Activated CD4-positive, alpha-beta T cell treated with anti-CD3 and anti-CD28 coated beads, Interleukin-2, amount 10 ng/mL, durations not matched to agents 7 days and 5 days (primary cell): ENCODE measurements at regions of chr6 and their contacts with region 1.

Region 1: DNA sequence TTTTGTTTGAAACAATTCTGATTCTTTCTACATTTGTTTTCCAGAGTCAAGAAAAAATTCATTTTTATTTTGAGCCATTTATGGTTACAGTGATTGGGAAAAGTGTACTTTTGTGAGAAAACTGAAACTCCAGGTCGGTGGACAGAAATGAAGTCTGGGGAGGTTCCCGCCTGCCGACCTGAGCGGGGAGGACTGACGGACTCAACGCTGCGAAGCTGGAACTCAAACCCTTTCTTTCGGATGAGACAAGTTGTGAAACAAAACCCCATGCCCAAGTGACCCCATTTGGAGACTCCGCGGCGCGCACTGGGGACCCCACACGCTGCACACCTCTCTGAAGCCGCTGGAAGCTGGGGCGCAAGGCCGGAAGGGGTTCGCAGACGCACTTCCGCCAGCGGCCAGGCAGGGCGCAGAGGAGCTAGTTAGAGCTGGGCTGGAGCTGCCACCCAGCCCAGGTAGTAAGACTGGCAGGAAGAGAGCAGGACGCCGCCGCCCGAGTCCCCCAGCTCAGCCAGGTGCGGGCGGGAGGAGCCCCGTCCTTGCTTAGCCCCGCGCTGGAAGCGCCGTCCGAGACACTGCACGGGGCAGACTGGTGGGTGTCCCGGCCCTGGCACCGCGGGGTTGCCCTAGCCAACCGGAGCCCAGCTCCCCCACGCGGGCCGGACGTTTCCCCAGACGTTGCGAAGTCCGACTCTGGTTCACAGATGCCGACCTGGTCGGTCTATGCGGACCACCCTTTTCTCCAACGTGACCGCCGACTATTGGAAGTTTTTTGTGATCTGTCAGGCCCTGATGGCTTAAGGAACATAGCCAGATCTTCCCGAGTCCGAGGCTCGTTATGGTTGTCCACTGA is 19.8 kb upstream of the ZSCAN16 start:
- DNase-seq: peak; percentile 83
- H3K4me3 Mint-ChIP-seq: peak overlapping the region; percentile 79
- H3K27ac Mint-ChIP-seq: peak overlapping the region; percentile 88
- H3K4me1 Mint-ChIP-seq: peaks cover 17% of the 10 kb centered on the region
- H3K27me3 Mint-ChIP-seq: peaks cover 25% of the 10 kb centered on the region

Region 2: DNA sequence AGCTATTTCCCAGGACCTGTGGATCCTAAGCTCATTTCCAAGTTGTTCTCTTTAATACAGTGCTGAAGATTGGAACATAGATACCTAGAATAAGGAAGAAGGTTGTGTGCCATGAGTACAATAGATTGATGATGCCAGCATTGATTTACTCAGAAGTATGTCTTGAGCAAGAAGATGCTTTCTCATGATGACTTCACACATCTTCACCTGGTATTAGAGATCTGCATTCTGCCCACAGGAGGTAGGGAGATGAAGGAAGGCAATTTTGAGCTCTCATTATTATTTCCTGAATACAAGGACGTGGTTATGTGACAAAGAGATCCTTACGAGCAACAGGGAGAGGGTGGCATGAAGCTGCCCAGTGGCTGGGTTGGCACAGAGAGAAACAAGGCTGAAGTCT is 44.2 kb before region 1 on chr6:
- CTCF ChIA-PET with region 1: no interaction called
- POLR2A ChIA-PET with region 1: no interaction called
- DNase-seq: no peak
- H3K4me3 Mint-ChIP-seq: no peak overlapping the region
- H3K27ac Mint-ChIP-seq: no peak overlapping the region
- H3K4me1 Mint-ChIP-seq: peaks cover 4% of the 10 kb centered on the region
- H3K27me3 Mint-ChIP-seq: peaks cover 18% of the 10 kb centered on the region

Region 3: GRCh38 chr6:28090917-28091586 is 13.6 kb before region 1 on chr6:
- CTCF ChIA-PET with region 1: interaction called, 13 read pairs
- POLR2A ChIA-PET with region 1: no interaction called
- DNase-seq: no peak
- H3K4me3 Mint-ChIP-seq: no peak overlapping the region
- H3K27ac Mint-ChIP-seq: no peak overlapping the region
- H3K4me1 Mint-ChIP-seq: no peaks in the 10 kb centered on the region
- H3K27me3 Mint-ChIP-seq: no peaks in the 10 kb centered on the region